ENCODE measurements at regions of chr21 and their contacts with region 1.

Region 1: DNA sequence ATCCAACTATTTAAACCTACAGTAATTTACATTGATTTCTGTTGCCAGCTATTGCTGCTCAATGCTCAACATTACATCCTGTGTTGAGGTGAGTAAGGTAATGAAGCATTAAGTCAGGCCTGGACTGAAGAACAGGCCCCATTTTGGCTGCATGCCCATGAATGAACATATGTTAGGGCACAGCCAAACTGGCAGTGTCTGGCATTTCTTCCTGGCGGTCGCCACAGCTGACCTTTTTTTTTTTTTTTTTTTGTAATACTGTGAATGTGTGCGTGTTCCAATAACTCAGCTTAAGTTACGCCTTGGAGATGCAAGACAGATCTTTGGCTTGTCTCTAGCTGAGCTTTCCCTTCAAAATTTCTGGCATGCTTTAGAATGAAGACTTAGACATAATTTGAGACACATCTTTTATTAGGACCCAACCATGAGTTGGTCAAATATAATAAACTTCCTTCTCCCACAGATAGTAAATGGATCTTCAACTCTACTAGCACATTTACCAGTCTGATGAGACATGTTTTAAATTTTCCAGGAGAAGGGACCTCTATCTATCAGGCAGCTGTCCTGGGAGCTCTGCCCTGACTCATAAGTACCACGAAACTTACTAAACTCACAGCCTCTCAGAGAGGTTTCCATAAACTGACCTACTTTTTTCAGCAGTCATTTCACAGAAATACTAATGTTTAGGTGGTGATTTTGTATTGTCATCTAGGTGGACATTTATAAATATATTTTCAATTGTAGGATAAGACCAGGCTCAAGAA is 341.1 kb upstream of the RUNX1 start:
- DNase-seq: no peak
- H3K4me3 Mint-ChIP-seq: no peak overlapping the region
- H3K27ac Mint-ChIP-seq: no peak overlapping the region
- H3K4me1 Mint-ChIP-seq: peaks cover 5% of the 10 kb centered on the region
- H3K27me3 Mint-ChIP-seq: peaks cover 1% of the 10 kb centered on the region

Region 2: DNA sequence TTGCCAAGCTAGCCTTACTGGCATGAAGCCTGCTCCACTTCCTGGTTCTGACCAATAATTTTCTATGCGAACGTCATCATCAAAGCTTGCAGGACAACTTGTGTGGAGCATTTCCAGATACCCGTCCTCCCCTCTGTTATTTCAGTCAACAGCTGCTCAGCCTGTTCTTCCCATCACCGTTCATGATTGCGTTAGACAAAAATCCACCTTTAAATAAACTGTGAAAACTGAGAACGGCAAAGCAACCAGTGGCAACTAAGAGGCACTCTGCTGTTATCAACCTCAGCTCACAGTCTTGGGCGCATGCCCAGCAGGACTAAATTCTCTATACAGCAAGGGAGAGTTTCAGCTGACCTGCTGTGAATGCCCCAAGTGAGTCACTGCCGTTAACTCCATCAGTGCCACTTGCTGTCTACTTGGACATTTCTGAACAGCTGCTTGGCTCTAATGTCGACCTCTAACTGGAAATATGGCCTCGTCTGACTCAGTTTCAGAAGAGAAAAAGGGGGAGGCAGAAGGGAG is 133.7 kb before region 1 on chr21:
- intact Hi-C with region 1: loop called (anchors 10 kb)
- DNase-seq: no peak
- H3K4me3 Mint-ChIP-seq: no peak overlapping the region
- H3K27ac Mint-ChIP-seq: peak overlapping the region; percentile 12
- H3K4me1 Mint-ChIP-seq: no peaks in the 10 kb centered on the region
- H3K27me3 Mint-ChIP-seq: no peaks in the 10 kb centered on the region

Region 3: DNA sequence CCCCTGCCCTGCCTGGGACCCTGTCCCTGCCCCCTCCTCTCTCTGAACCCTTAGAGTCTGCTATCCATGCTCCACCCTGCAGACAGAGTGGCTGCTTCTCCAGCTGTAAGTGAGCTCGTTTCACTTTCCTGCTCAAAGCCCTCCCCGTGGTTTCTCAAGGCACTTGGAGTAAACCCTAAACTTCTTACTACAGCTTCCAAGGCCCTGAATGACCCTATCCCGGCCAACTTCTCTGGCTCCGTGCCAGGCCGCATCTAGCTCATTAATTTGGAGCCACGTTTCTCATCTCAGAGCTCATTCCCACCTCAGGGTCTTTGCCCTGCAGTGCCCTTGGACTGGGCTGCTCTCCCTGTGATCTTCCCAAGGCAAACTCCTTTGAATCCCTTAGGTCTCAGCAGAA is 106.0 kb before region 1 on chr21:
- intact Hi-C with region 1: no loop called
- DNase-seq: peak; percentile 51
- H3K4me3 Mint-ChIP-seq: no peak overlapping the region
- H3K27ac Mint-ChIP-seq: no peak overlapping the region
- H3K4me1 Mint-ChIP-seq: peaks cover 4% of the 10 kb centered on the region
- H3K27me3 Mint-ChIP-seq: no peaks in the 10 kb centered on the region